K562 (cell line): ENCODE measurements at regions of chr11 and their contacts with region 1.

Region 1: DNA sequence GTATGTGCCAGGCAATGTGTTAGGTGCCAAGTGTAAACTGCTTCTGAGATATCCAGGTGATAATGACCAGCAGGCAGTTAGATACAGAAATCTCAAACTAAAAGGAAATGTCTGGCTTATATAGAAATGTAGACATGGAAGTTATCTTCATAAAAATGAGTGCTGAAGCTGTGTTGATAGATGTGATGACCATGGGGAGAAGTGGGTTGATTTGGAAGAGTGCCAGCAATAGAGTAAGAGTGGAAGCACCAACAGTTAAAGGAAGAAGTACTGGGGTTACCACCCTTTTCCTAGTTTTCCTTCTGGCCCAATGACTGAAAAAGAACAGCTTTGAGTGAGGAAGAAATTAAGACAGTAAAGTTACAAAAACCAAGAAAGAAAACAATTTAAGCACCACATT is 68.5 kb downstream of the C2CD3 start:
- DNase-seq: peak in 1 of 4 experiments; percentile 10
- ATAC-seq: no peak
- H3K4me3 ChIP-seq: no peak overlapping the region
- H3K27ac ChIP-seq: no peak overlapping the region
- H3K4me1 ChIP-seq: no peaks in the 10 kb centered on the region
- H3K27me3 ChIP-seq: no peaks in the 10 kb centered on the region
- CTCF ChIP-seq: no peak
- EP300 ChIP-seq: no peak
- POLR2A ChIP-seq: no peak
- RAD21 ChIP-seq: no peak

Region 2: DNA sequence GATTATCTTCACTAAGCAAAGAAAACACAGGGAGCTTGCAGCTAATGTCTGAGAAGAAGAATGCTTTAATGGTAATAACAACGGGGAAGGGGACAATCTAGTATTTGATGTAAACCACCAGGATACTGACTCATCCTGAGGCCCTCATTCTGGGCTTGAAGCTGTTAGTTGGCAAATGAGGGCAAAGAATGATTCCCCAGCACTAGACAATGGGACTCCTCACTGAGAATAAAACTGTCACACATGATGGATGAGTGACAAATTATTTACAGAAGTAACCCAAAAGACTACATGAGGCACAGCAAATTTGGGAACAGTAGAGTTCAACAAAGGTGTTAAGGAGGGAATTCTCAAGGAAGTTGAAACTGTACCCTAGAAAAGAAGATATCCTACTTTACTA is 580.7 kb before region 1 on chr11:
- CTCF ChIA-PET with region 1: no interaction called
- POLR2A ChIA-PET with region 1: no interaction called
- in situ Hi-C with region 1: loop called (anchors 10 kb)
- intact Hi-C with region 1: no loop called
- DNase-seq: no peak
- ATAC-seq: no peak
- H3K4me3 ChIP-seq: no peak overlapping the region
- H3K27ac ChIP-seq: no peak overlapping the region
- H3K4me1 ChIP-seq: no peaks in the 10 kb centered on the region
- H3K27me3 ChIP-seq: no peaks in the 10 kb centered on the region; a peak in 2 of 5 replicates
- CTCF ChIP-seq: no peak
- EP300 ChIP-seq: no peak
- POLR2A ChIP-seq: no peak
- RAD21 ChIP-seq: no peak